Naive thymus-derived CD4-positive, alpha-beta T cell (primary cell): ENCODE measurements at regions of chr2 and their contacts with region 1.

Region 1: DNA sequence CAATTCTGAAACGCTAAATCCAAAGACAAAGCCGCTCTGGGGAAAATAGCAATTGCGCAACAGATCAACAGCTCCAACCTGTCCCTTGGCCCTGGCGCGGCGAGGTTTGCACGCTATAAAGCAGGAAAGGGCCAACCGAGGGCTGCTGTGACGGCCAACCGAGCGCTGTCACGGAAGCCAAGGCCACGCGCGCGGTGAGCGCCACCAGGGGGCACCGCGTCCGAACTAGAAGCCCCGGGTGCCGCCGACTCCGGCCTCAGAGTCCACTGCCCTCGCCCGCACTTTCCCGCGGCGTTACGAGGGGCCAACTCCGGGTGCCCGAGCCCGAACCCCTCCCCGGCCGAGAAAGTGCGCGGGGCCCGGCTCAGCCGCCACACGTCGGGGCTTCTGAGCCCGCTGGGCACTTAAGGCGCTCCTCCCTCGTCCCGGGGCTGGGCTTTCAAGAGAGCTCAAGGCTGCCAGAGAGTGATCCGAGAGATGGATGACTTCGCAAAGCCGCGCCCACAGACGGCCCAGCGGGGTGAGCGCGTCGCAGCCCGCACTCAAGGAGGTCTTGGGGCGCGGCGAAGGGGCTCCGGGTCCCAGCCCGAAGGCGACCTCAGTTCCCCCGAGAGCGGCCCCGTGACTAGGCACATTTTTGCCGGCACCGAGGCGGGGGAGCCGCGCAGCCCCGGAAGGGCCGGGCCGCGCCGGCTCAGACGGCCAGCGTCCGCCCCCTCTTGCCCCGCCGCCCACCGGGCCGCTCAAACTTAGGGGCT is 897 bp downstream of the NFE2L2 start:
- DNase-seq: peak; percentile 91 to 98 (median 95)
- ATAC-seq: peak; percentile 76
- H3K4me3 ChIP-seq: peak overlapping the region; percentile 80
- H3K4me3 Mint-ChIP-seq: peak overlapping the region; percentile 90 to 100 (median 95)
- H3K27ac ChIP-seq: peak overlapping the region; percentile 98
- H3K27ac Mint-ChIP-seq: peak overlapping the region; percentile 86 to 98 (median 96)
- H3K4me1 ChIP-seq: peaks cover 27 to 28% of the 10 kb centered on the region in 2 donors
- H3K4me1 Mint-ChIP-seq: peaks cover 28 to 62% (median 56%) of the 10 kb centered on the region in 7 donors
- H3K27me3 ChIP-seq: no peaks in the 10 kb centered on the region
- H3K27me3 Mint-ChIP-seq: no peaks in the 10 kb centered on the region

Region 2: DNA sequence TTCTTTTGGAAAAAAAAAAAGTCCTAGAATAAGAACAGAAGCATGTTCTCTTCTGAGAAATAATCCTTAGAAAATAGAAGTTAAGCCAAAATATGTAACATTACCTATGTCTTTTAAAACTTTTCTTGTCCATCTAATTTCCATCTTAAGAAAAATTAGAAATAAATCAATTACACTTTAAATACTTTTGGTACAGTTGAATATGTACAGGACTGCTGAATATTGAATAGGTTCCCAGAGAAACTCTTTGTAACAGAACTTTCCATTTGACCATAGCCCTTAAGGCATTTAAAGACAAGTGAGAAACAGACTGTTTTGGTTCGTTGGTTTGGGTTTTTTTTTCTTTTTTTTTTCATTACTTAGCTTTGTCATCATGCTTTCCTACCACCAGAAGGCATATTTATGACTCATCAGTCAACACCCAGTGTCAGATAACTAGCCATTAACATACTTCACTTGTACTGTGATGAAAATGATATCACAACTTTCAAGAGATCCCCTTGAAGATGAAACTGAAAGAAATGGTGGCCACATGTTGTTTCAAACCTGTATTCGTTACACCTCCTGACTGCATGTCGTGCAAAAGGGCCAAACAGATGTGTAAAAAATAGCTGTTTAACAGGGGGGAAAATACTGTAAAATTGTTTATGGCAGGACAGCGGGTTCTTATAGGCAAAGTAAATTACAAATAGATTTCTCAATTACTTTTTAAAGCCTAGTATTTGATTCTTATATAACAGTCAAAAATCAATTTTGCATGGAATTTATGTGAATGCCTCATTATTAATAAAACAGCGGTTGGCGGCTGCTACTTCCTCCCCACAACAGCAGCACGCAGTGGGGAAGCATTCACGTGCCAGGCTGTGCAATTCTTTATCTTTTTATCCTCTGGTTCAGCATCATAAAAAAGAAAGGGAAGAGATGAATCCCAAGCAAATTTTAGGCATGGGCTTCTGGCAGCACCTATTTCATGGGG is 331.8 kb before region 1 on chr2:
- CTCF ChIA-PET with region 1: no interaction called
- POLR2A ChIA-PET with region 1: no interaction called
- intact Hi-C with region 1: loop called in 1 of 2 experiments (anchors 1 kb)
- DNase-seq: no peak
- ATAC-seq: peak; percentile 89
- H3K4me3 ChIP-seq: no peak overlapping the region
- H3K4me3 Mint-ChIP-seq: peak overlapping the region in 2 of 10 donors; percentile 39 to 69
- H3K27ac ChIP-seq: no peak overlapping the region
- H3K27ac Mint-ChIP-seq: peak overlapping the region in 2 of 9 donors; percentile 11 to 90
- H3K4me1 ChIP-seq: peaks cover 0 to 7% of the 10 kb centered on the region in 2 donors
- H3K4me1 Mint-ChIP-seq: peaks cover 6 to 20% (median 8%) of the 10 kb centered on the region in 7 donors
- H3K27me3 ChIP-seq: no peaks in the 10 kb centered on the region
- H3K27me3 Mint-ChIP-seq: peaks cover 0 to 1% (median 0%) of the 10 kb centered on the region in 5 donors

Region 3: DNA sequence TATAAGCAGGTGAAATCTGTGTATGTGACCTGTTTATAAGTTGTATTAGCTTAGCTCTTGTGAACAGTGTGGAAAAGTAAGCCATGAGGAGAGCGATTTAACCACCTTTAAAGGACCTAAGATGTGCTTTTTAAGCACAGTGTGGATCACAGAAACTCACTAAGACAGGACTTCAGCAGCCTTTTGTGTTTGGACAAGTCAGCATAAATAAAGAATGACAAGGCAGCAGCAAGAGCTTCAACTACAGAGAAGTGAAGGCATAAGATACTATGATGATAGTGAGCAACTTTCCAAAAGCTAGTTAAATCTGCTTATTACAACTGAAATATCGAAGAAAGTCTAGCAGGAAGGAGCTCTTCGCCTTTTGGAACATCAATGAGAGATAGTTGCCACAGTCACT is 42.1 kb before region 1 on chr2:
- CTCF ChIA-PET with region 1: no interaction called
- POLR2A ChIA-PET with region 1: interaction called, 141 read pairs
- intact Hi-C with region 1: loop called in 1 of 2 experiments (anchors 5 kb)
- DNase-seq: no peak
- ATAC-seq: no peak
- H3K4me3 ChIP-seq: no peak overlapping the region
- H3K4me3 Mint-ChIP-seq: no peak overlapping the region
- H3K27ac ChIP-seq: no peak overlapping the region
- H3K27ac Mint-ChIP-seq: peak overlapping the region in 5 of 9 donors; percentile 5 to 49 (median 12)
- H3K4me1 ChIP-seq: peaks cover 12 to 20% of the 10 kb centered on the region in 2 donors
- H3K4me1 Mint-ChIP-seq: peaks cover 27 to 67% (median 56%) of the 10 kb centered on the region in 7 donors
- H3K27me3 ChIP-seq: no peaks in the 10 kb centered on the region
- H3K27me3 Mint-ChIP-seq: no peaks in the 10 kb centered on the region

Region 4: DNA sequence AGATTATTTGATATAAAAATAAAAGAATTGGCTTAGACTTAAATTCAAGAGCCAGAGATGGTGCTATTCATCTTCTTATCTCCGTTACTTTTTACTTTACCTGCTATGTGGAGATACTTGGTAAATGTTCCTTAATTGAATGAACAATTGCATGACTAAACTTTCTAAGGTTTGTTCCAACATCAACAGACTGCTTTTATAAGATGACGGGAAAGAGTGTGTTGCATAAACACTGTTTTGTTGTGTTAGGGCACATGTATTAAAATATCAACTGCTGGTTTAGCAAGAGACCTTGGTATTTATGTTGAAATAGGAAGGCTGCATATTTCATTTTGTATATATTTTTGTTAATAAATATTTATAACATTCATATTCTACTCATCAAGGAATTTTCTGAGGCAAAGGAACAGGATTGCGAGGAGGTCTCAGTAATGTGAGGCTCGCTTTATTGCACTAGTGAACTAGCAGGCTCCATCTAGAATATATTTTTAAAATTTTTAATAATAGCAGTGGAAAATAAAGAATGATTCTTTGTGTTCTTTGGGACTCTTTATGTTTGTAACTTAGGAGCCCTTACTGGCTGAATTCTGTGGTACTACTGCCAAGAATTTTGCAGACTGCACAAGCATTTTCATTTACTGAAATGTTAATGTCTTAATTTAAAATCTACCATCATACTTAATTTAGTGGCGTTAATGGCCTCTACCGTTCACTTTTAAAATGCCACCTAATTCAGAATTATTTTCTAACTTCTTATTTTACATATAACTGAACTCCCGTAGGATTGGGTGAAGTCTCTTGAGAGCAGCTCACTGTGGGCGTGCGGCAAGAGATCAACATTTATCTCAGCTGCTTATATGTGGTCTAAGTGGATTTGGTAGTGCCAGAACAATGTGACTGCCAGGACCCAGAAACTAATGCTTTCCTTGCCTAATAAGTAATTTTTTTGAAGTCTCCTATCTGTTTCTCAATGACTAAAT is 11.7 kb after region 1 on chr2:
- CTCF ChIA-PET with region 1: interaction called, 5 read pairs
- POLR2A ChIA-PET with region 1: interaction called, 31 read pairs
- intact Hi-C with region 1: no loop called
- DNase-seq: no peak
- ATAC-seq: no peak
- H3K4me3 ChIP-seq: no peak overlapping the region
- H3K4me3 Mint-ChIP-seq: no peak overlapping the region
- H3K27ac ChIP-seq: no peak overlapping the region
- H3K27ac Mint-ChIP-seq: no peak overlapping the region
- H3K4me1 ChIP-seq: no peaks in the 10 kb centered on the region
- H3K4me1 Mint-ChIP-seq: peaks cover 0 to 25% (median 5%) of the 10 kb centered on the region in 7 donors
- H3K27me3 ChIP-seq: no peaks in the 10 kb centered on the region
- H3K27me3 Mint-ChIP-seq: no peaks in the 10 kb centered on the region

Region 5: DNA sequence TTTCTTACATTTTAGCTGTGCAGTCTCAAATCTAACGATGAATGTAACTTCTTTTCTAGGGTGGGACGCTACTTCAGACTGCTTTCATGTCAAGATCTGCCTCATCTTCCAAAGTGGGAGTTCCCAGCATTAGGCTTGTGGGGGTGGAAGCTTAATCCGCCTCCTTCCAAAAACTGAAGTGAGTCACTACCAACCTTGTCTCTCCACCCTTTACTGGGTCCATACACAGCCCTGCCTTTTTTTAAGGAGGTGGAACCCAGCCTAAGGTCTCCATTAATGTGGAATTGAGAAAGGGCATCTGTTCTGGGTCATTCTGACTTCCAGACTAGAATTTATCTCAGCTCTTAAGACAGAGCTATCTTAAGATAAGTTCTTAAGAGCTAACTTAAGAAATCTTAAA is 42.9 kb after region 1 on chr2:
- CTCF ChIA-PET with region 1: interaction called, 27 read pairs
- POLR2A ChIA-PET with region 1: interaction called, 282 read pairs
- intact Hi-C with region 1: loop called in 1 of 2 experiments (anchors 1 kb)
- DNase-seq: no peak
- ATAC-seq: no peak
- H3K4me3 ChIP-seq: no peak overlapping the region
- H3K4me3 Mint-ChIP-seq: no peak overlapping the region
- H3K27ac ChIP-seq: no peak overlapping the region
- H3K27ac Mint-ChIP-seq: peak overlapping the region in 4 of 9 donors; percentile 76 to 95 (median 89)
- H3K4me1 ChIP-seq: peaks cover 6 to 32% of the 10 kb centered on the region in 2 donors
- H3K4me1 Mint-ChIP-seq: peaks cover 15 to 55% (median 39%) of the 10 kb centered on the region in 7 donors
- H3K27me3 ChIP-seq: no peaks in the 10 kb centered on the region
- H3K27me3 Mint-ChIP-seq: no peaks in the 10 kb centered on the region

Region 6: GRCh38 chr2:177413703-177414102 is 150.1 kb after region 1 on chr2:
- CTCF ChIA-PET with region 1: interaction called, 4 read pairs
- POLR2A ChIA-PET with region 1: interaction called, 24 read pairs
- intact Hi-C with region 1: loop called (anchors 1 kb)
- DNase-seq: no peak
- ATAC-seq: no peak
- H3K4me3 ChIP-seq: no peak overlapping the region
- H3K4me3 Mint-ChIP-seq: no peak overlapping the region
- H3K27ac ChIP-seq: no peak overlapping the region
- H3K27ac Mint-ChIP-seq: peak overlapping the region in 6 of 9 donors; percentile 7 to 44 (median 23)
- H3K4me1 ChIP-seq: no peaks in the 10 kb centered on the region
- H3K4me1 Mint-ChIP-seq: peaks cover 6 to 57% (median 34%) of the 10 kb centered on the region in 7 donors
- H3K27me3 ChIP-seq: no peaks in the 10 kb centered on the region
- H3K27me3 Mint-ChIP-seq: no peaks in the 10 kb centered on the region

Region 7: DNA sequence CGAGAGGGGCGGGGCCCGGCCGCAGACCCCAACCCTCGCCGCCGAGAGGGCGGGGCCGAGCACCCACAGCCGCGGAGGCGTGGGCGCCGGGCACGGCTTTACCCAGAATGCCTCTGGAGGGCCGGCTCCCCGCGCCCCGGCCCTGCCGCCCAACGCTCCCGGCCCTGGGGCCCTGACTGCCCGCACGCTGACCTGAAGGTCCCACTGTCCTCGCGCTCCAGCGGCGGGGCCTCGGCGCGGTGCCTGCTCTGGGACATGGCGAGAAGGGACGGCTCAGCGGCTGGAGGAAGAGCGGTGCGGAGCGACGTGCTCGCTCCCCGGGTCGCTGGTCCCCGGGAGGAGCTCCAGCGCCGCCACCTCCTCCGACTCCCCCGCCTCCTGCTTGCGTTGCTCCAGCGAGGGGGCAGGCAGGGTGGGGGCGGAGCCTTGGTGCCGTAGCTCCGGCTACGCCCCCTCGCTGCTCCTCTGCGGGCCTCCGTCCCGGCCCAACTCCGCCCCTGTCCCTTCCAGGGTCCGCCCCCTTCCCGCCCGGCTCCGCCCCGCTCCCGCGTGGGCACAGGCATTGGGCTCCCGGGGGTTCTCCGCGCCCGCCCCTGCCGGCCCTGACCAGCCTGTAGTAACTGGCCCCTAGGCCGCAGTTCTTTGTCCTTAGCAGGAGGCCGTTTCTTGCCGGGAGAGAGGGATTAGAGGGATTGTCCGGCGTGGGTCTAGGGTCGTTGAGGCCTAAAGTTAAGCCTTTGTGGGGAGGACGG is 1187.3 kb after region 1 on chr2 and contains the starts of genes PJVK and PRKRA:
- CTCF ChIA-PET with region 1: no interaction called
- POLR2A ChIA-PET with region 1: interaction called, 7 read pairs
- intact Hi-C with region 1: loop called in 1 of 2 experiments (anchors 1 kb)
- DNase-seq: peak; percentile 92 to 99 (median 93)
- ATAC-seq: peak; percentile 94
- H3K4me3 ChIP-seq: peak within 1 kb of the TSS; percentile 94
- H3K4me3 Mint-ChIP-seq: peak within 1 kb of the TSS; percentile 90 to 96 (median 90)
- H3K27ac ChIP-seq: peak within 1 kb of the TSS; percentile 100
- H3K27ac Mint-ChIP-seq: peak within 1 kb of the TSS; percentile 88 to 98 (median 95)
- H3K4me1 ChIP-seq: peaks cover 12 to 25% of the 10 kb centered on the region in 2 donors
- H3K4me1 Mint-ChIP-seq: peaks cover 12 to 36% (median 30%) of the 10 kb centered on the region in 7 donors
- H3K27me3 ChIP-seq: no peaks in the 10 kb centered on the region
- H3K27me3 Mint-ChIP-seq: peaks cover 0 to 9% (median 0%) of the 10 kb centered on the region in 5 donors
- total RNA-seq, gene PJVK: 2.1 to 6.3 (median 3.8) TPM
- total RNA-seq, gene PRKRA: 40.8 to 113 (median 59.4) TPM